ENCODE measurements at regions of chr14 and their contacts with region 1.

Region 1: DNA sequence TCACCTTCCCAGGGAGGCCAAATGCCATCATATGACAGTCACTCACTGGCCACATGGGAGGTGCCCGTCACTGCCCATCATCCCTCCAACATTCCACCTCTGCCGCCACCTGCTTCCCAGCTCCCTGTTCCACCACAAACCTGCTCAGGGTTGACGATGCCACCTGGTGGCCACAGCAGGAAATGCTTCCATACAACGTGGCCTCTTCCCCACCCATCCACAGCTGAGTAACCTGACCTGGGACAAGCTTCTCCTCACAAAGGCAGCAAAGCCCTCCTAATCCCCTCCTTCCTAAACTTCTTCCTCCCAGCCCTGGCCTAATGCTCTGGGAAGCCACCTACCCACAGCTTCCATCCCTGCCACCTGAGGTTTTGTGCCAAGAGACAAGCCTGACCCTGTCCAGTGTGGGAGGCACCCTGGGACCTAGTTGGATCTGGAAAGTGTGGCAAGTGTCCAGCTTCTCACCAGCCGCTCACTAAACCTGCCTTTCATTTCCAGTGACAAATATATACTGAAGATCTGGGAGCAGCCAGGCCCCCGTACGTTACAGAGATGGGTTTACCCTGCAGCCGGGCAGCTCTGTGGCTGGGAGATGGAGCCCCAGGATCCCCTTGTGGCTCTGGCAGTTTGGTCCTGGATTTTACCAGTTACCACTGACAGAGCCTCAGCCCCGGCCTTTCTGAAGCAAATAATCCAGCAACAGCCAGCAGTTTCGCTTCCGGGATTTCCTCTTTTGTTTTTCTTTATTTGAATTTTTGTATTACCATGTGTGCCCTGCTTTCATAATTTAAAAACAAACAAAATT is 4.2 kb downstream of the DEGS2 start:
- DNase-seq: peak; percentile 60
- H3K4me3 Mint-ChIP-seq: no peak overlapping the region
- H3K27ac Mint-ChIP-seq: no peak overlapping the region
- H3K4me1 Mint-ChIP-seq: no peaks in the 10 kb centered on the region
- H3K27me3 Mint-ChIP-seq: peaks cover 17% of the 10 kb centered on the region

Region 2: GRCh38 chr14:100056964-100057795 is 98.1 kb before region 1 on chr14:
- CTCF ChIA-PET with region 1: interaction called, 3 read pairs
- intact Hi-C with region 1: loop called (anchors 5 kb)
- DNase-seq: no peak
- H3K4me3 Mint-ChIP-seq: peak overlapping the region; percentile 25
- H3K27ac Mint-ChIP-seq: peak overlapping the region; percentile 80
- H3K4me1 Mint-ChIP-seq: peaks cover 52% of the 10 kb centered on the region
- H3K27me3 Mint-ChIP-seq: no peaks in the 10 kb centered on the region

Region 3: GRCh38 chr14:100142073-100143040 is 12.9 kb before region 1 on chr14:
- CTCF ChIA-PET with region 1: interaction called, 14 read pairs
- intact Hi-C with region 1: no loop called
- DNase-seq: no peak
- H3K4me3 Mint-ChIP-seq: no peak overlapping the region
- H3K27ac Mint-ChIP-seq: no peak overlapping the region
- H3K4me1 Mint-ChIP-seq: peaks cover 11% of the 10 kb centered on the region
- H3K27me3 Mint-ChIP-seq: no peaks in the 10 kb centered on the region

Region 4: DNA sequence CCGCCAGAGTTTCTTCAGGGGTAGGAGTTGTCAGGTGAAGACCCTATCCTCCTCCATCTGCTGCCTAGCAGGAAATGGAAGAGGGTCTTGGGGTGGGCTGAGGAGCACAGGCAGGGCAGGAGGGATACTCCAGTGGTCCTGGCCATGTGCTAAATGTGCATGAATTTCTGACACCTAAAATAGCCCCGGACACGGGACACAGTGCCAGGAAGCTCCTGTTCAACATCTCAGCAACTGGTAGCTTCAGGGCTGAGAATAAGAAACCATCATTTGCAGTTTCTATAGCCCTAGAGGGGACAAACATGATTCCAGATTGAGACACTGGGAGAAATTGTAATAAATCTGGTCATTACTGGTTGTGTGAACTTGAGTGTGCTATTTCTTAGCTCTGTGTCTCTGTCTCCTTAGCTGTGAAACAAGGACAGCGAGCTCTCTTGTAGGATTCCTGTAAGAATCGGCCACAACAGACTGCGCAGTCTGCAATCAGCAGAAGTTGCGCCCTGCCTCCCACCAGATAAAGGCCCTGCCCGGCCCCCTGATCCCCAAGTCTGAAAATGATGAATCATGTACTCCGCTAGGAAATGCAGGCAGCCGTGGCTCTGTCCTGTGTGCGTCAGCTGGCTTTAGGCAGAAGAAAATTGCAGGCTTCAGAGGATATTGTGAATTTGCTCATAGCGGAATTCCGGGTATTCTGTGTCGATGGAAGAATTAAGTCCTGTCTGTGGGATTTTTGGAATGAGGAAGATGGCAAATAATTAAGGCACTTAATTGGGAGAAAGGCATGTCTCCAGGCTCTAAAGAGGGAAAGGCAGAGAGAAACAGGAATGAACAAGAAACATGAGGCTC is 635.5 kb after region 1 on chr14:
- CTCF ChIA-PET with region 1: no interaction called
- intact Hi-C with region 1: no loop called
- DNase-seq: no peak
- H3K4me3 Mint-ChIP-seq: no peak overlapping the region
- H3K27ac Mint-ChIP-seq: no peak overlapping the region
- H3K4me1 Mint-ChIP-seq: no peaks in the 10 kb centered on the region
- H3K27me3 Mint-ChIP-seq: peaks cover 7% of the 10 kb centered on the region

Measured in activated naive CD4-positive, alpha-beta T cell treated with anti-CD3 and anti-CD28 coated beads for 36 hours (primary cell).